Heart right ventricle (tissue), 16 donors: ENCODE measurements at regions of chr12 and their contacts with region 1.

Region 1: GRCh38 chr12:75712252-75712651 is 200.8 kb upstream of the KRR1 start:
- DNase-seq: no peak
- ATAC-seq: no peak
- H3K4me3 ChIP-seq: no peak overlapping the region
- H3K27ac ChIP-seq: no peak overlapping the region
- H3K4me1 ChIP-seq: peaks cover 0 to 55% (median 26%) of the 10 kb centered on the region in 9 donors
- H3K27me3 ChIP-seq: no peaks in the 10 kb centered on the region
- CTCF ChIP-seq: no peak

Region 2: GRCh38 chr12:75560167-75560566 is 152.1 kb before region 1 on chr12:
- intact Hi-C with region 1: loop called in 1 of 10 experiments (anchors 10 kb)
- DNase-seq: no peak
- ATAC-seq: peak; percentile 67 to 86 (median 84)
- H3K4me3 ChIP-seq: no peak overlapping the region
- H3K27ac ChIP-seq: no peak overlapping the region
- H3K4me1 ChIP-seq: peaks cover 0 to 22% (median 9%) of the 10 kb centered on the region in 9 donors
- H3K27me3 ChIP-seq: no peaks in the 10 kb centered on the region
- CTCF ChIP-seq: peak in 8 of 9 donors; percentile 28 to 71 (median 50)